T-cell (primary cell): ENCODE measurements at regions of chr9 and their contacts with region 1.

Region 1: DNA sequence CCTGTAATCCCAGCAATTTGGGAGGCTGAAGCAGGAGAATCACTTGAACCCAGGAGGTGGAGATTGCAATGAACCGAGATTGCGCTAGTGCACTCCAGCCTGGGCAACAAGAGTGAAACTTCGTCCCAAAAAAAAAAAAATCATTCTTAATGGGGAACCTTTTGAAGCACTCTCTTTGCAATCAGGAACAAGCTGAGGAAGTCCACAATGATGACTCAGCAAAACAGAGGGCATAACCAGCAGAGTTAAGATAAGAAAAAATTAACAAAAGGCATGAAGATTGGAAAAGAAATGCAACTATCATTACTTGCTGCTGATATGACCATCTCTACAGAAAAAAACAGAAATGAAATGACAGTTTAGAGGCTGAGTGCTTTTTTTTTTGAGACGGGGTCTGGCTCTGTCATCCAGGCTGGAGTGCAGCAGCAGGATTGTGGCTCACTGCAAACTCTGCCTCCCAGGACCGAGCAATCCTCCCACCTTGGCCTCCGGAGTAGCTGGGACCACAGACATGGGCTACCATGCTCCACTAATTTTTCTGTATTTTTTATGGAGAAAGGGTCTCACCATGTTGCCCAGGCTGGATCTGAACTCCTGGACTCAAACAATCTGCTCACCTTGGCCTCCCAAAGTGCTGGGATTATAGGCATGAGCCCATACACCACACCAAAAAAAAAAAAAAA is 88.0 kb downstream of the FNBP1 start:
- DNase-seq: peak in 1 of 35 experiments; percentile 39
- ATAC-seq: no peak
- H3K4me3 ChIP-seq: no peak overlapping the region
- H3K4me3 Mint-ChIP-seq: peak overlapping the region in 2 of 3 donors; percentile 6 to 9
- H3K27ac ChIP-seq: peak overlapping the region; percentile 1
- H3K27ac Mint-ChIP-seq: peak overlapping the region; percentile 50 to 66
- H3K4me1 ChIP-seq: peaks cover 0 to 31% of the 10 kb centered on the region in 2 experiments
- H3K4me1 Mint-ChIP-seq: peaks cover 34 to 49% (median 43%) of the 10 kb centered on the region in 3 donors
- H3K27me3 ChIP-seq: no peaks in the 10 kb centered on the region
- H3K27me3 Mint-ChIP-seq: no peaks in the 10 kb centered on the region

Region 2: DNA sequence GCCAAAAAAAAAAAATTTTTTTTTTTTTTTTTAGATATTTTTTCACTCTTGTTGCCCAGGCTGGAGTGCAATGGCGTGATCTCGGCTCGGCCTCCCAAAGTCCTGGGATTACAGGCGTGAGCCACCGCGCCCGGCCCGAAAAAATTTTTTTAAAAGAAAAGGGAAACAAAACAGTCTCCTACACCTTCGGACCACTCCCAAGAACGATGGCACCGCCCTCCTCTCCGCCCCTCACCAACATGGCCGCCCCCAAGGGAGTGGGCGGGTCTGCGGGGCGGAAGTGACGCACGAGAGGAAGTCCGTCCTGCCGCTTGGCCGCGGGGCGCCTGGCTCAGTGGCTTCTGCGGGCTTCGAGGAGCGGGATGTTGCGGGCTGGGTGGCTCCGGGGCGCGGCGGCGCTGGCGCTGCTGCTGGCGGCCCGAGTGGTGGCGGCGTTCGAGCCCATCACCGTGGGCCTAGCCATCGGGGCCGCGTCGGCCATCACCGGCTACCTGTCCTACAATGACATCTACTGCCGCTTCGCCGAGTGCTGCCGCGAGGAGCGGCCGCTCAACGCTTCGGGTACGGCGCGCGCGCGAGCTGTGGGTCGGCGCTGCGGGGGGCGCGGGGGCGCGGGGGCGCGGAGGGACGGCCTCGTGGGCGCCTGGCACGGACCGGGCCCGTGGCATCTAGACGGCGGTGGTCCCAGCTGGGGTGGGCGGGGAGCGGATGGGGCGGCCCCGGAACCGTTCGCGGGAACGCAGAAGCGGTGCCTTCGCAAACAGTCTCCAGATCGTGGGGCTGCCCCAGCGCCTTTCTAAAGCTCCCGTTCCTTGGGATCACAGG is 151.9 kb before region 1 on chr9 and contains the start of gene TOR1B:
- CTCF ChIA-PET with region 1: no interaction called
- POLR2A ChIA-PET with region 1: no interaction called
- DNase-seq: peak; percentile 82 to 98 (median 91)
- ATAC-seq: peak; percentile 93 to 95 (median 95)
- H3K4me3 ChIP-seq: peak within 1 kb of the TSS; percentile 56 to 78
- H3K4me3 Mint-ChIP-seq: peak within 1 kb of the TSS; percentile 85 to 91 (median 91)
- H3K27ac ChIP-seq: peak within 1 kb of the TSS; percentile 57
- H3K27ac Mint-ChIP-seq: peak within 1 kb of the TSS; percentile 94 to 96
- H3K4me1 ChIP-seq: peaks cover 6 to 23% of the 10 kb centered on the region in 2 experiments
- H3K4me1 Mint-ChIP-seq: peaks cover 25 to 30% (median 28%) of the 10 kb centered on the region in 3 donors
- H3K27me3 ChIP-seq: no peaks in the 10 kb centered on the region
- H3K27me3 Mint-ChIP-seq: no peaks in the 10 kb centered on the region
- total RNA-seq, gene TOR1B: 19.3 to 31.0 (median 26.4) TPM

Region 3: DNA sequence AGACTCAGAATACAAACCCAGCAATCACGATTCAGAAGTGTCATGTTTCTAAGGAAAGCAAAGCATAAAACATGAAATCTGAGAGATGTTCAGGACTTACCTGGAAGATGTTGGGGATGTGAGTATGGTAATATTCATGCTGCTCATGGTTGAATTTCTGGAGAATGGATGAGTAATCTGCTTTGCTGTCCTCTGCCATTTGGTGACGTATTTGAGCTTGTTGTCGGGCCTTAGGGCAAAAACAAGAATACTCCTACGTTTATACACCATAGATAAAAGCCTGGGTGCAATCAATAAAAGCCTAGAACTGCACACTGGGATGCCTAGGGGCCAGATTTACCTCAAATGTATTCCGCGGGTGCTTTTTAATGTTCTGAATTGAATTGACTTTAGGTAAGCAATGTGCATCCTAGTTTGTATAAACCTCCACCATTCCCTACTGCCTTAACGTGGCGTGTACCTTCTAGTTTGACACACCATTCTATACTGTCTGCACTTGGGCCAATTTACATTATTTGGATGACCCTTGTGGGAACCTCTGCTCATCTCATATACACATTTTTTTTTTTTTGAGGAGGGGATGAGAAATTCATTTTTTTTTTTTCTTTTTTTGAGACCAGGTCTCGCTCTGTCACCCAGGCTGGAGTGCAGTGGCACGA is 25.4 kb before region 1 on chr9:
- CTCF ChIA-PET with region 1: no interaction called
- POLR2A ChIA-PET with region 1: interaction called in 1 of 2 experiments, 10 read pairs
- DNase-seq: no peak
- ATAC-seq: no peak
- H3K4me3 ChIP-seq: no peak overlapping the region
- H3K4me3 Mint-ChIP-seq: no peak overlapping the region
- H3K27ac ChIP-seq: no peak overlapping the region
- H3K27ac Mint-ChIP-seq: peak overlapping the region; percentile 23 to 52
- H3K4me1 ChIP-seq: peaks cover 20 to 26% of the 10 kb centered on the region in 2 experiments
- H3K4me1 Mint-ChIP-seq: peaks cover 33 to 50% (median 45%) of the 10 kb centered on the region in 3 donors
- H3K27me3 ChIP-seq: no peaks in the 10 kb centered on the region
- H3K27me3 Mint-ChIP-seq: no peaks in the 10 kb centered on the region

Region 4: GRCh38 chr9:129983891-129984290 is 28.9 kb after region 1 on chr9:
- CTCF ChIA-PET with region 1: no interaction called
- POLR2A ChIA-PET with region 1: no interaction called
- DNase-seq: no peak
- ATAC-seq: no peak
- H3K4me3 ChIP-seq: no peak overlapping the region
- H3K4me3 Mint-ChIP-seq: no peak overlapping the region
- H3K27ac ChIP-seq: peak overlapping the region; percentile 1
- H3K27ac Mint-ChIP-seq: peak overlapping the region; percentile 69
- H3K4me1 ChIP-seq: peaks cover 5 to 41% of the 10 kb centered on the region in 2 experiments
- H3K4me1 Mint-ChIP-seq: peaks cover 65 to 80% (median 71%) of the 10 kb centered on the region in 3 donors
- H3K27me3 ChIP-seq: no peaks in the 10 kb centered on the region
- H3K27me3 Mint-ChIP-seq: no peaks in the 10 kb centered on the region

Region 5: GRCh38 chr9:130053504-130054324 is 98.7 kb after region 1 on chr9 and contains the start of gene GPR107:
- CTCF ChIA-PET with region 1: no interaction called
- POLR2A ChIA-PET with region 1: interaction called in 1 of 2 experiments, 10 read pairs
- DNase-seq: peak; percentile 43 to 84 (median 66)
- ATAC-seq: peak; percentile 97 to 99 (median 98)
- H3K4me3 ChIP-seq: peak within 1 kb of the TSS; percentile 86 to 89
- H3K4me3 Mint-ChIP-seq: peak within 1 kb of the TSS; percentile 88 to 92 (median 92)
- H3K27ac ChIP-seq: peak within 1 kb of the TSS; percentile 81
- H3K27ac Mint-ChIP-seq: peak within 1 kb of the TSS; percentile 89 to 90
- H3K4me1 ChIP-seq: peaks cover 10 to 36% of the 10 kb centered on the region in 2 experiments
- H3K4me1 Mint-ChIP-seq: peaks cover 30 to 39% (median 35%) of the 10 kb centered on the region in 3 donors
- H3K27me3 ChIP-seq: no peaks in the 10 kb centered on the region
- H3K27me3 Mint-ChIP-seq: no peaks in the 10 kb centered on the region
- total RNA-seq, gene GPR107: 21.3 to 29.1 (median 22.1) TPM

Region 6: GRCh38 chr9:130107234-130107861 is 152.3 kb after region 1 on chr9:
- CTCF ChIA-PET with region 1: no interaction called
- POLR2A ChIA-PET with region 1: interaction called in 1 of 2 experiments, 10 read pairs
- DNase-seq: peak; percentile 56 to 93 (median 82)
- ATAC-seq: peak; percentile 78 to 92 (median 90)
- H3K4me3 ChIP-seq: no peak overlapping the region
- H3K4me3 Mint-ChIP-seq: no peak overlapping the region
- H3K27ac ChIP-seq: no peak overlapping the region
- H3K27ac Mint-ChIP-seq: peak overlapping the region; percentile 48 to 74
- H3K4me1 ChIP-seq: peaks cover 0 to 17% of the 10 kb centered on the region in 2 experiments
- H3K4me1 Mint-ChIP-seq: peaks cover 15 to 22% (median 18%) of the 10 kb centered on the region in 3 donors
- H3K27me3 ChIP-seq: no peaks in the 10 kb centered on the region
- H3K27me3 Mint-ChIP-seq: no peaks in the 10 kb centered on the region